ENCODE measurements at regions of chr1 and their contacts with region 1.

Region 1: GRCh38 chr1:168603501-168604110 is 27.2 kb downstream of the XCL1 start:
- DNase-seq: peak; percentile 80
- ATAC-seq: peak; percentile 98
- H3K4me3 Mint-ChIP-seq: no peak overlapping the region
- H3K27ac Mint-ChIP-seq: no peak overlapping the region
- H3K4me1 Mint-ChIP-seq: peaks cover 3% of the 10 kb centered on the region
- H3K27me3 Mint-ChIP-seq: peaks cover 6% of the 10 kb centered on the region

Region 2: GRCh38 chr1:168520052-168520751 is 83.4 kb before region 1 on chr1:
- CTCF ChIA-PET with region 1: no interaction called
- DNase-seq: peak; percentile 88
- ATAC-seq: peak; percentile 85
- H3K4me3 Mint-ChIP-seq: peak overlapping the region; percentile 74
- H3K27ac Mint-ChIP-seq: peak overlapping the region; percentile 92
- H3K4me1 Mint-ChIP-seq: peaks cover 74% of the 10 kb centered on the region
- H3K27me3 Mint-ChIP-seq: no peaks in the 10 kb centered on the region

Region 3: DNA sequence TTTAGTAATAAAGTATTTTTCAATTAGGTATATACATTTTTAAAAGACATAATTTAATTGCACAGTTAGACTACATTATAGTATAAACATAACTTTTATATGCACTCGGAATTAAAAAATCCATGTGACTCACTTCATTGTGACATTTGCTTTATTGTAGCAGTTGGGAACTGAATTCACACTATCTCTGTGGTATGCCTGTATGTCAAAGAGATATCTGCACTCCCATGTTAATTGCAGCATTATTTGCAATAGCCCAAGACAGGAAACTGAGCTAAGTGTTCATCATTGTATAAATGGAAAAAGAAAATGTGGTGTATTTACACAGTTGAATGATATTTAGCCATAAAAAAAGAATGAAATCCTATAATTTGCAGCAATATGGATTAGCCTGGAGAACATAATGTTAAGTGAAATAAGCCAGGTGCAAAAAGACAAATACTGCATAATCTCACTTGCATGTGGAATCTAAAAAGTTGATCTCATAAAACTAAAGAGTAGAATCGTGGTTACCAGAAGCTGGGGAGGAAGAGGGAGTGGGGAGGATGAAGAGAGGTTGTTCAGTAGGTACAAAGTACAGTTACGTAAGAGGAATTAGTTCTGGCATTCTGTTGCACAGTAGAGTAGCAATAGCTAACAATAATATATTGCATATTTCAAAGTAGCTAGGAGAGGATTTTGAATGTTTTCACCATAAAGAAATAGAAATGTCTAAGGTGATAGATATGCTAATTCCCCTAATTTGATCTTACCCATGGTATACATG is 60.6 kb after region 1 on chr1:
- CTCF ChIA-PET with region 1: no interaction called
- DNase-seq: no peak
- ATAC-seq: no peak
- H3K4me3 Mint-ChIP-seq: no peak overlapping the region
- H3K27ac Mint-ChIP-seq: no peak overlapping the region
- H3K4me1 Mint-ChIP-seq: no peaks in the 10 kb centered on the region
- H3K27me3 Mint-ChIP-seq: no peaks in the 10 kb centered on the region

Region 4: GRCh38 chr1:169108863-169109560 is 505.4 kb after region 1 on chr1:
- CTCF ChIA-PET with region 1: interaction called, 10 read pairs
- DNase-seq: no peak
- ATAC-seq: no peak
- H3K4me3 Mint-ChIP-seq: no peak overlapping the region
- H3K27ac Mint-ChIP-seq: no peak overlapping the region
- H3K4me1 Mint-ChIP-seq: peaks cover 25% of the 10 kb centered on the region
- H3K27me3 Mint-ChIP-seq: peaks cover 12% of the 10 kb centered on the region

Region 5: GRCh38 chr1:169348383-169349036 is 744.9 kb after region 1 on chr1:
- CTCF ChIA-PET with region 1: interaction called, 39 read pairs
- DNase-seq: no peak
- ATAC-seq: no peak
- H3K4me3 Mint-ChIP-seq: no peak overlapping the region
- H3K27ac Mint-ChIP-seq: no peak overlapping the region
- H3K4me1 Mint-ChIP-seq: peaks cover 17% of the 10 kb centered on the region
- H3K27me3 Mint-ChIP-seq: no peaks in the 10 kb centered on the region

Region 6: DNA sequence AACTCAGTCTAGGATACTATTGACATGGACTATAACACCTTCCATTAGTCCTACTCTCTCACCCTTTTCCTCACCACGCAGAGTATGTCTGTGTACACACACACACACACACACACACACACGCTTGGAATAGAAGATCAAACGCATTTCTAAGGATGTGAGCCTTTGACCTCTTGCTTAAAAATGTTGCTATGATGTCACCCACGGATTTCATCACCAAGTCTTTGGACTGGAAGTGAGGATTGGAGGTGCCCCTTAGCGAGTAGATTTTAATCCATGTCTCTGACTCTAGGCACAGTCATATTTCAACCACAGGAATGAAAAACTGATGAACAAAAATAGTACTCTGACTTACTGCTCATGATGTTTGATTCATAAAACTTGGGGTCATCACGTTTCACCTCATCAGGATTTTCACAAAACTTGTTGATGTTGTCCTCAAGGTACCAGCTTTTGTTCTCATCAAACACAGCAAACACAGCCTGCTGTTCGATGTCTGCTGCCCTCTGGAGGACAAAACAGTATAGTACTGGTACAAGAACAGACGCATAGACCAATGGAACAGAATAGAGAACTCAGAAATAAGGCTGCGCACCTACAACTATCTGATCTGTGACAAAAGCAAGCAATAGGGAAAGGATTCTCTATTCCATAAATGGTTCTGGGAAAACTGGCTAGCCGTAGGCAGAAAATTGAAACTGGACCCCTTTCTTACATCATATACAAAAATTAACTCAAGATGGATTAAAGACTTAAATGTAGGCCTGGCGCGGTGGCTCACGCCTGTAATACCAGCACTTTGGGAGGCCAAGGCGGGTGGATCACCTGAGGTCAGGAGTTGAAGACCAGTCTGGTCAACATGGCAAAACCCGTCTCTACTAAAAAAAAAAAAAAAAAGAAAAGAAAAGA is 942.7 kb after region 1 on chr1:
- CTCF ChIA-PET with region 1: interaction called, 19 read pairs
- DNase-seq: peak; percentile 66
- ATAC-seq: peak; percentile 83
- H3K4me3 Mint-ChIP-seq: no peak overlapping the region
- H3K27ac Mint-ChIP-seq: no peak overlapping the region
- H3K4me1 Mint-ChIP-seq: no peaks in the 10 kb centered on the region
- H3K27me3 Mint-ChIP-seq: no peaks in the 10 kb centered on the region